ENCODE measurements at regions of chr11 and their contacts with region 1.

Region 1: GRCh38 chr11:64778508-64779346 is at the start of gene SF1:
- DNase-seq: peak; percentile 100
- ATAC-seq: peak; percentile 90
- H3K4me3 ChIP-seq: peak within 1 kb of the TSS; percentile 92 to 99
- H3K27ac ChIP-seq: peak within 1 kb of the TSS; percentile 99
- H3K4me1 ChIP-seq: peaks cover 13 to 32% of the 10 kb centered on the region in 2 experiments; a peak in 3 of 4 replicates
- H3K27me3 ChIP-seq: no peaks in the 10 kb centered on the region
- CTCF ChIP-seq: no peak
- POLR2A ChIP-seq: peak; percentile 54
- RAD21 ChIP-seq: no peak
- total RNA-seq, gene SF1: 403 TPM

Region 2: DNA sequence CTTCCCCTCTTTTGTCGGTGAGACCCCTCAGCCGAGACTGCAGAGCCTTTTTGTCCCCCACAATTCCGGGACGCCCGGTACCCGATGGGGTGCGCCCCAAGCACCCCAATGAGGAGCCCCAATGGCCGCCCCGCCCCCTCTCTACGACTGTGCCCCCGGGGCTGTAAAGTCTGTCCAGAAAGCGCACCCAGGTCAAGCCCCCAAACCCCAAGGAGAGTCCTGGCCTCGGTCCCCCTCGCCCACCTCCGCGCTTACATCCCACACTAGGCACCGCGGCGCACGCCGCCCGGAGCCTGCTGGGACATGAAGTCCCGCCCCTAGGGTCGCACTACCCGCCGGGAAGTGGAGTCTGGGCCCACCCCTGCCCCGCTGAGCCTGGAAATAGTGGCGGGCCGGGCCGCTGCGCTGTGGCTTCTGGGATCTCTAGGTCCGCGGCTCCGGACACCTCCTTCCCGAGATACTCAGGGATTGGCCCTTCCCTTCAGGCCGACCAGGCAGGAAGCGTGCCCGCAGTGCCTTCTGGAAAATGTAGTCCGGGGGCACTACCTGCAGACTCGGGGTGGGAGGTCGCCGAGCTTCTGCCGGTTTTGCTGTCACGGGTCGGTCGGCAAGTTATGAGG is 31.7 kb after region 1 on chr11 and contains the start of gene MEN1:
- CTCF ChIA-PET with region 1: no interaction called
- POLR2A ChIA-PET with region 1: interaction called, 11 read pairs
- RAD21 ChIA-PET with region 1: no interaction called
- intact Hi-C with region 1: no loop called
- DNase-seq: peak; percentile 90
- ATAC-seq: peak; percentile 97
- H3K4me3 ChIP-seq: peak within 1 kb of the TSS; percentile 89 to 91
- H3K27ac ChIP-seq: peak within 1 kb of the TSS; percentile 65
- H3K4me1 ChIP-seq: peaks cover 7 to 18% of the 10 kb centered on the region in 2 experiments
- H3K27me3 ChIP-seq: no peaks in the 10 kb centered on the region
- CTCF ChIP-seq: no peak
- POLR2A ChIP-seq: peak; percentile 70
- RAD21 ChIP-seq: no peak
- total RNA-seq, gene MEN1: 62.1 TPM

Measured in HCT116 (cell line).